Left lung (tissue), 14 donors: ENCODE measurements at regions of chr11 and their contacts with region 1.

Region 1: GRCh38 chr11:16605894-16606783 is 132.3 kb upstream of the C11orf58 start:
- DNase-seq: peak; percentile 86 to 96 (median 91)
- ATAC-seq: peak; percentile 87
- H3K4me3 ChIP-seq: peak overlapping the region; percentile 39 to 55
- H3K27ac ChIP-seq: peak overlapping the region; percentile 70 to 83
- H3K4me1 ChIP-seq: peaks cover 6 to 29% of the 10 kb centered on the region in 2 donors
- H3K27me3 ChIP-seq: peaks cover 48 to 100% of the 10 kb centered on the region in 2 donors
- CTCF ChIP-seq: peak; percentile 91 to 94

Region 2: GRCh38 chr11:15650105-15650938 is 955.8 kb before region 1 on chr11:
- intact Hi-C with region 1: loop called in 1 of 2 experiments (anchors 10 kb)
- DNase-seq: peak; percentile 91 to 98 (median 95)
- ATAC-seq: peak; percentile 100
- H3K4me3 ChIP-seq: peak overlapping the region; percentile 24 to 41
- H3K27ac ChIP-seq: peak overlapping the region; percentile 6 to 69
- H3K4me1 ChIP-seq: peaks cover 5 to 15% of the 10 kb centered on the region in 2 donors
- H3K27me3 ChIP-seq: peaks cover 0 to 17% of the 10 kb centered on the region in 2 donors
- CTCF ChIP-seq: peak; percentile 98 to 100

Region 3: DNA sequence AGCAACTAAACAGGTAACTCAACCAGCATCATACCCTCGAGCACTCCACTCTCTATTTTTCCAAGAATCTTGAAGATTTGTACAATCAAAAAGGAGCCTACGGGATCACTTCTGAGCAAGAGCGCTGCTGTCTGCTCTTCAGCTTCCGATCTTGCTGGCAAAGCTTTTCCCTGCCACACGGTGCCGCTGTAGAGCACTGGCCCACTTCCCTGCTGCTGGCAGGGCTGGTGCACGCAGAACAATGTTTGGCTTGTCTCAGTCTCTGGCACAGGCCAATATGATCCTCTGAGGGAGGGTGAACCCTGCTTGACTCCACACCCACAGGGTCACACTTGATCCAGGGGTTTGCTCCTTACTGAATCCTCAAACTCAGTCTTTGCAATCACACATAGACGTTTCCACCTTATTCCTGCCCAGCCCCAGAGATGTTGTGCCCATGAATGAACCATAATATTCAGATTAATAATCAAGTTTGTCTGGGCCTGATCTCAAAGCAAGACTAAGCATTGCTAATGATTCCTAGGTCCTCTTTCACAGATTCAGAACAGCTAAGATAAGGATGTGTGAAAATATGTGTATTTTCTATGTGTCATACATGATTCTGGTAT is 786.4 kb before region 1 on chr11:
- intact Hi-C with region 1: loop called in 1 of 2 experiments (anchors 10 kb)
- DNase-seq: peak in 3 of 4 donors; percentile 65 to 91 (median 75)
- ATAC-seq: peak; percentile 91
- H3K4me3 ChIP-seq: no peak overlapping the region
- H3K27ac ChIP-seq: no peak overlapping the region
- H3K4me1 ChIP-seq: peaks cover 11 to 23% of the 10 kb centered on the region in 2 donors
- H3K27me3 ChIP-seq: no peaks in the 10 kb centered on the region
- CTCF ChIP-seq: peak; percentile 82

Region 4: GRCh38 chr11:17294033-17294432 is 687.9 kb after region 1 on chr11:
- intact Hi-C with region 1: no loop called
- DNase-seq: no peak
- ATAC-seq: no peak
- H3K4me3 ChIP-seq: no peak overlapping the region
- H3K27ac ChIP-seq: no peak overlapping the region
- H3K4me1 ChIP-seq: peaks cover 0 to 4% of the 10 kb centered on the region in 2 donors
- H3K27me3 ChIP-seq: no peaks in the 10 kb centered on the region
- CTCF ChIP-seq: no peak